Upper lobe of right lung (tissue), 1 donor: ENCODE measurements at regions of chr10 and their contacts with region 1.

Region 1: GRCh38 chr10:28663576-28664313 is 13.6 kb upstream of the BAMBI start:
- DNase-seq: peak; percentile 82
- ATAC-seq: peak; percentile 95
- H3K4me3 ChIP-seq: no peak overlapping the region
- H3K27ac ChIP-seq: no peak overlapping the region
- H3K4me1 ChIP-seq: no peaks in the 10 kb centered on the region
- H3K27me3 ChIP-seq: peaks cover 20% of the 10 kb centered on the region
- CTCF ChIP-seq: peak; percentile 97

Region 2: GRCh38 chr10:28054228-28054837 is 609.4 kb before region 1 on chr10:
- intact Hi-C with region 1: no loop called
- DNase-seq: no peak
- ATAC-seq: no peak
- H3K4me3 ChIP-seq: no peak overlapping the region
- H3K27ac ChIP-seq: no peak overlapping the region
- H3K4me1 ChIP-seq: no peaks in the 10 kb centered on the region
- H3K27me3 ChIP-seq: no peaks in the 10 kb centered on the region
- CTCF ChIP-seq: no peak

Region 3: GRCh38 chr10:28991326-28992270 is 327.9 kb after region 1 on chr10:
- intact Hi-C with region 1: loop called (anchors 10 kb)
- DNase-seq: no peak
- ATAC-seq: peak; percentile 87
- H3K4me3 ChIP-seq: no peak overlapping the region
- H3K27ac ChIP-seq: no peak overlapping the region
- H3K4me1 ChIP-seq: no peaks in the 10 kb centered on the region
- H3K27me3 ChIP-seq: no peaks in the 10 kb centered on the region
- CTCF ChIP-seq: peak; percentile 62

Region 4: GRCh38 chr10:29304264-29305030 is 640.7 kb after region 1 on chr10:
- intact Hi-C with region 1: loop called (anchors 10 kb)
- DNase-seq: no peak
- ATAC-seq: peak; percentile 90
- H3K4me3 ChIP-seq: no peak overlapping the region
- H3K27ac ChIP-seq: peak overlapping the region; percentile 7
- H3K4me1 ChIP-seq: no peaks in the 10 kb centered on the region
- H3K27me3 ChIP-seq: no peaks in the 10 kb centered on the region
- CTCF ChIP-seq: peak; percentile 78